ENCODE measurements at regions of chr11 and their contacts with region 1.

Region 1: DNA sequence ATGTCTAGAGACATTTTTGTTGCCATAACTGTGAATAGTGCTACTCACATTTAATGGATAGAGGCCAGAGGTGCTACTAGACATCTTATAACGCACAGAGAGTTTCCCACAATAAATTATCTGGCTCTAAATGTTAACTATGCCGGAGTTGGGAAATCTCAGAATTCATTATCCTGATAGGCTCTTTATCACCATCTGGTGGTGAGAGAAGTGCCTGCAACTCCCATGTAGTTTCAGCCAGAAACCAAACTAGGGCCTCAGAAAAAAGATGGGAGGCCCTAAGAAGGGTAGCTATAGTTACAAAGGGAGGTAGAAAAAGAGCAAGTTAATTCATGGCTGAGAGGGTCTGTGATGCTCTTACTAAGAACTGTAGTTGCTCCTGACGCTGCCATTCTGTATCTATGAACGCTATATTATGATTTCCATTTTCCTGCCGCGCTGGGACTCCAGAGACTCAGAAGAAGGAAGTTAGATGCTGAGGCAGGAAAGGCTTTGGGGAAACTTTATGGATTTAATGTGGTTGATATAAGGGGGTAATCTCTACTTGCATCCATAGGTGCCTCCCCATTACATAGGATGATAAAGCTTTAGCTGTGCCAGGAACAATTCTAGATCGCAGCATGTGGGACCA is 22.9 kb upstream of the MRPL17 start:
- DNase-seq: peak; percentile 47
- H3K4me3 ChIP-seq: no peak overlapping the region; a peak in 1 of 4 replicates
- H3K27ac ChIP-seq: no peak overlapping the region
- H3K4me1 ChIP-seq: 0 out of 4 replicates have a peak, but pooled peaks cover 0 to 2% of the 10 kb centered on the region in 2 experiments
- H3K27me3 ChIP-seq: no peaks in the 10 kb centered on the region; the same call in 1 of the 2 replicates
- CTCF ChIP-seq: peak; percentile 93
- EP300 ChIP-seq: no peak
- RAD21 ChIP-seq: peak; percentile 79

Region 2: GRCh38 chr11:6523253-6523652 is 182.8 kb before region 1 on chr11:
- CTCF ChIA-PET with region 1: interaction called, 46 read pairs
- POLR2A ChIA-PET with region 1: no interaction called
- DNase-seq: no peak
- H3K4me3 ChIP-seq: no peak overlapping the region
- H3K27ac ChIP-seq: peak overlapping the region in 1 of 2 experiments; percentile 50; a peak in 2 of 4 replicates
- H3K4me1 ChIP-seq: peaks cover 0 to 4% of the 10 kb centered on the region in 2 experiments; a peak in 3 of 4 replicates
- H3K27me3 ChIP-seq: no peaks in the 10 kb centered on the region
- CTCF ChIP-seq: no peak
- EP300 ChIP-seq: no peak
- RAD21 ChIP-seq: no peak

Region 3: DNA sequence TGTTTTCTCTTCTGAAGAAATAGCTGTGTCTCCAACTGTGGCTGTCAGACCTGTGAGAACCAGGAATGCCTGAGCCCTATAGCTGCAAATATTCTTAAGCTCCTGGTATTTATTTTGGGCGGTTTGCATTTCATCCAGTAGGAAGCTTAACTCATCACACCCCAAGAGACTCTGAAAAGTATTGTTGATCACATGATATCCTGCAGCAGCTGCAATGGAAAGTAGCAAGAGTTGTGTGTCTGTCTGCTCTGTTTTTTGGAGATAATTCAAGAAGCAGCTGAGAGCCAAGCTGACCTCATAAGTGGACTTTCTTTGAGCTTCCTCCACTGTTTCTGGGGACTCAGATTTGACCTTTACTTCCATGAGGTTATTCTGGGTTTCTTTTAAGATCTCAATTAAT is 13.6 kb after region 1 on chr11:
- CTCF ChIA-PET with region 1: interaction called, 14 read pairs
- POLR2A ChIA-PET with region 1: no interaction called
- DNase-seq: no peak
- H3K4me3 ChIP-seq: no peak overlapping the region
- H3K27ac ChIP-seq: no peak overlapping the region
- H3K4me1 ChIP-seq: no peaks in the 10 kb centered on the region
- H3K27me3 ChIP-seq: peaks cover 26% of the 10 kb centered on the region; the same call in 1 of the 2 replicates
- CTCF ChIP-seq: no peak
- EP300 ChIP-seq: no peak
- RAD21 ChIP-seq: no peak